CD4-positive, alpha-beta T cell (primary cell): ENCODE measurements at regions of chr3 and their contacts with region 1.

Region 1: DNA sequence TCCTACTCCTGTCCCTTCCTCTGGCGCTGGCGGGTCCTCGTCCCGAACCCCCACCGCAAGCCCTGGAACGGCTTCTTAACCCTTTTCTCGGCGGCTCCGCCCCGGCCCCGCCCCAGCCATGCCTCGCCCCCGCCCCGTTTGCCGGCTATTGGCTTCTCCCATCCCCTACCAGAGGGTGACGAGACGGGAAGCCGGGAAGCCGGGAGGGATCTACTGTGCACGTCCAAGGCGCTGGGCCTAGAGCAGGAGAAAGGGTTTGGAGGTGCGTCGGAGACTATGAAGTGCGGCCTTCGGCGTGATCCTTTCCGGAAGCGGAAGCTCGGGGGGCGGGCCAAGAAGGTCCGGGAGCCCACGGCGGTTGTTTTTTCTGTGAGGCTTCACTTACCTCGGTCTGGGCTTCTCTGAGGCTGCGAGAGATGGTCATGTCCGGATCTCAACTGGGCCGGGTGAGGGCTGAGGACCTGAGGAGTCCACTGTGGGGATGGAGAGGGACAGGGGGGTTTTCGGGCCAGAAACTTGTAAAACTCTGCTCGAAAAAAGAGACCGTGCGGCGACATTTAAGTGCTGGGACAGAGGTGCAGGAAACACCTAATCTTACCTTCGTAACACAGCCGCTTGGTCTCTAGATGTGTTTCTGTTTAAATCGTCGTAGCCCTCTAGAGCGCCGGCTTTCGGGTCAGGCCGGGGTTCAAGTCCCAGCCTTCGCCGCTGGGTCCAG is 21.4 kb downstream of the ROPN1B start:
- DNase-seq: peak; percentile 48 to 85 (median 62)
- ATAC-seq: peak; percentile 88
- H3K4me3 ChIP-seq: peak overlapping the region; percentile 91
- H3K4me3 Mint-ChIP-seq: peak overlapping the region; percentile 98
- H3K27ac ChIP-seq: peak overlapping the region; percentile 73 to 87
- H3K27ac Mint-ChIP-seq: peak overlapping the region; percentile 99
- H3K4me1 ChIP-seq: peaks cover 8% of the 10 kb centered on the region
- H3K4me1 Mint-ChIP-seq: peaks cover 53% of the 10 kb centered on the region
- H3K27me3 ChIP-seq: no peaks in the 10 kb centered on the region
- H3K27me3 Mint-ChIP-seq: no peaks in the 10 kb centered on the region
- CTCF ChIP-seq: no peak

Region 2: GRCh38 chr3:126003447-126004280 is 13.3 kb after region 1 on chr3:
- CTCF ChIA-PET with region 1: no interaction called
- POLR2A ChIA-PET with region 1: interaction called, 12 read pairs
- intact Hi-C with region 1: loop called in 1 of 2 experiments (anchors 1 kb)
- DNase-seq: no peak
- ATAC-seq: no peak
- H3K4me3 ChIP-seq: no peak overlapping the region
- H3K4me3 Mint-ChIP-seq: no peak overlapping the region
- H3K27ac ChIP-seq: no peak overlapping the region
- H3K27ac Mint-ChIP-seq: no peak overlapping the region
- H3K4me1 ChIP-seq: no peaks in the 10 kb centered on the region
- H3K4me1 Mint-ChIP-seq: no peaks in the 10 kb centered on the region
- H3K27me3 ChIP-seq: no peaks in the 10 kb centered on the region
- H3K27me3 Mint-ChIP-seq: no peaks in the 10 kb centered on the region
- CTCF ChIP-seq: no peak

Region 3: DNA sequence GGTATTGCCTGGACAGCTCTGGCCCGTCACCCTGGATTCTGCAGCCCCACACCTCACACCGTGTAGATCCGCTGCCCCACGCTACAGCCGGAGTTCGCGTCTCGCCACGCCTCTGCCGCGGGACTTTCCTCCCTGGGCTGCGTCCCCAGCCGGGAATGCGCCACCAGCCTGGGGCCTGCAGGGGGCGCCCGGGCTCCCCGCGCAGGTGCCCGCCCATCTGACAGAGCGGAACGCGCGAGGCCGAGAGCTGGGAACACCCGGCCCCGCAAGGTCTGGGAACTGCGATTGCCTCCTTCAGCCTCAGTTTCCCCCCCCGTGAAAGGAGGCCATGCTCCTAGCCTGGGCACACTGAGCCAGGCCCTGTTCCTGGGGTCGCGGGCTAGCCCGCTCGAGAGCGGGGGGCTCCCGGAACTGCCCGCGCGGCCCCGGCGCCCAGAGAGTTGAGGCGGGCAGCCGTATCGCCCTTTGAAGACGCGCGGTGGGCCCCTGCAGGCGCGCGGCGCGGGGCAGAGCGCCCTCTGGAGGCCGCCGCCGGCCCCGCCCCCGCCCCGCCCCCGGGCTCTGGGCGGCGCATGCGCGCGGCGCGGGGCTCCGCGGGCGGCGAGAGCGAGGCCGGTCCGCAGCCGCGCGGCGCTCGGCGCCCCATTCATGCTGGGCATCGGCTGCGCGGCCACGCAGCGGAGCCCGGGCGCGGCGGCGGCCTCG is 992.2 kb after region 1 on chr3 and contains the start of gene PLXNA1:
- CTCF ChIA-PET with region 1: no interaction called
- POLR2A ChIA-PET with region 1: no interaction called
- intact Hi-C with region 1: loop called in 1 of 2 experiments (anchors 10 kb)
- DNase-seq: peak; percentile 76 to 95 (median 85)
- ATAC-seq: peak; percentile 82
- H3K4me3 ChIP-seq: peak within 1 kb of the TSS; percentile 67
- H3K4me3 Mint-ChIP-seq: peak within 1 kb of the TSS; percentile 89
- H3K27ac ChIP-seq: peak within 1 kb of the TSS; percentile 88 to 90
- H3K27ac Mint-ChIP-seq: peak within 1 kb of the TSS; percentile 93
- H3K4me1 ChIP-seq: peaks cover 30% of the 10 kb centered on the region
- H3K4me1 Mint-ChIP-seq: peaks cover 15% of the 10 kb centered on the region
- H3K27me3 ChIP-seq: peaks cover 0 to 5% of the 10 kb centered on the region in 2 experiments
- H3K27me3 Mint-ChIP-seq: peaks cover 10% of the 10 kb centered on the region
- CTCF ChIP-seq: peak; percentile 99
- total RNA-seq, gene PLXNA1: 9.8 to 10.6 TPM